Natural killer cell (primary cell): ENCODE measurements at regions of chr1 and their contacts with region 1.

Region 1: GRCh38 chr1:117615474-117615873 is 9.6 kb downstream of the TENT5C start:
- DNase-seq: peak; percentile 51 to 77
- ATAC-seq: peak; percentile 84 to 89 (median 89)
- H3K4me3 ChIP-seq: no peak overlapping the region
- H3K4me3 Mint-ChIP-seq: peak overlapping the region; percentile 74
- H3K27ac ChIP-seq: no peak overlapping the region
- H3K27ac Mint-ChIP-seq: peak overlapping the region; percentile 76 to 87
- H3K4me1 ChIP-seq: peaks cover 40% of the 10 kb centered on the region
- H3K4me1 Mint-ChIP-seq: peaks cover 67 to 74% of the 10 kb centered on the region in 2 donors
- H3K27me3 ChIP-seq: no peaks in the 10 kb centered on the region
- H3K27me3 Mint-ChIP-seq: peaks cover 4 to 5% of the 10 kb centered on the region in 2 donors
- CTCF ChIP-seq: no peak

Region 2: DNA sequence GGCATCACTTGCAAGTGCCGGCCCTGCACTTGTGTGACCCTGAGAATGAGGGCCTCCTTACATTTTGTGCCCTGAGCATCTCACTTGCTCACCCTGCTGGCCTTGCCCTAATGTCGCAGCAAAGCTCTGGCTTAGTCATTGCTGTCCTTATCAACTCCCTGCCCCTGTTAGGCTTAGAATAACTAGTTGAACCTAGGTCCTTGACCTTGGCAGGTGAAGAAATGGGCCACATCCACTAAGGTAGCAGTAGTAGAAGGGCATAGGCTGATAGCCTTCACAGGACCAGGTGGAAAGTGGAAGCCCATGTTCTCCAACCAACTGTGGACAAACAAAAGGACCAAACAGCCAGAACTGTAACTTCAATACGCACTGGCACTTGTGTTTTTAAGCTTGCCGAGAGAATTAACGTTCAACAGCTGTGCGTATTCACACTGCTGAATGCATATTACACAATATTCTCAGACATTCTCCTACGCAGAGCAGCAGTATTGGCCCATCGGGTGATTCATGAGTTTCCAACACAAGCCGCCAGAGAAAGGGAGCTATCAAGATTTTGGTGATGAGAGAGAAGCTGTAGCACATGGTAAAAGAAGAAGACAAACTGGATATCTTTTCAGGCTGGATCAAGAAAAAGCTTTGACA is 733.5 kb before region 1 on chr1:
- intact Hi-C with region 1: no loop called
- DNase-seq: peak in 1 of 2 donors; percentile 49
- ATAC-seq: peak in 1 of 3 donors; percentile 36
- H3K4me3 ChIP-seq: no peak overlapping the region
- H3K4me3 Mint-ChIP-seq: no peak overlapping the region
- H3K27ac ChIP-seq: no peak overlapping the region
- H3K27ac Mint-ChIP-seq: no peak overlapping the region
- H3K4me1 ChIP-seq: peaks cover 19% of the 10 kb centered on the region
- H3K4me1 Mint-ChIP-seq: no peaks in the 10 kb centered on the region
- H3K27me3 ChIP-seq: no peaks in the 10 kb centered on the region
- H3K27me3 Mint-ChIP-seq: no peaks in the 10 kb centered on the region
- CTCF ChIP-seq: no peak

Region 3: DNA sequence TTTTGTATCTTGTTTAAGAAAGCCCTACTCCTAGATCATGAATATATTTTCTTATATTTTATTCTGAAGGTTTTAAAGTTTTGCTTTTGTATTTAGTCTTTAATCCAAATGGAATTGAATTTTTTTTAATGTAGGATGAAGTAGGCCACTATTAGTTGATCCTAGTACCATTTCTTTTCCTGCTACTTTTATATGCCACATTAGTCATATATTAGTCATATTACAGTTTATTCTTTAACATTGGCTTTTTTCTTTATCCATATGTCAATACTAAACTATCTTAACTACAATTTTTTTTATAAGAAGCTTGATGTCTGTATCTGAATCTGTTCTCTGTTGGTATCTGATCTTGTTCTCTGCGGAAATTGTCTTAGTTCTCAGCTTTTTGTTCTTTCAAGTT is 199.5 kb before region 1 on chr1:
- intact Hi-C with region 1: no loop called
- DNase-seq: no peak
- ATAC-seq: no peak
- H3K4me3 ChIP-seq: no peak overlapping the region
- H3K4me3 Mint-ChIP-seq: no peak overlapping the region
- H3K27ac ChIP-seq: no peak overlapping the region
- H3K27ac Mint-ChIP-seq: no peak overlapping the region
- H3K4me1 ChIP-seq: no peaks in the 10 kb centered on the region
- H3K4me1 Mint-ChIP-seq: peaks cover 26 to 28% of the 10 kb centered on the region in 2 donors
- H3K27me3 ChIP-seq: no peaks in the 10 kb centered on the region
- H3K27me3 Mint-ChIP-seq: no peaks in the 10 kb centered on the region
- CTCF ChIP-seq: no peak

Region 4: GRCh38 chr1:117644696-117645311 is 29.3 kb after region 1 on chr1:
- intact Hi-C with region 1: loop called (anchors 1 kb)
- DNase-seq: peak; percentile 46 to 62
- ATAC-seq: peak; percentile 83 to 99 (median 97)
- H3K4me3 ChIP-seq: no peak overlapping the region
- H3K4me3 Mint-ChIP-seq: peak overlapping the region; percentile 67
- H3K27ac ChIP-seq: no peak overlapping the region
- H3K27ac Mint-ChIP-seq: peak overlapping the region; percentile 37 to 75
- H3K4me1 ChIP-seq: peaks cover 12% of the 10 kb centered on the region
- H3K4me1 Mint-ChIP-seq: peaks cover 16 to 18% of the 10 kb centered on the region in 2 donors
- H3K27me3 ChIP-seq: peaks cover 3% of the 10 kb centered on the region
- H3K27me3 Mint-ChIP-seq: peaks cover 30 to 37% of the 10 kb centered on the region in 2 donors
- CTCF ChIP-seq: no peak

Region 5: DNA sequence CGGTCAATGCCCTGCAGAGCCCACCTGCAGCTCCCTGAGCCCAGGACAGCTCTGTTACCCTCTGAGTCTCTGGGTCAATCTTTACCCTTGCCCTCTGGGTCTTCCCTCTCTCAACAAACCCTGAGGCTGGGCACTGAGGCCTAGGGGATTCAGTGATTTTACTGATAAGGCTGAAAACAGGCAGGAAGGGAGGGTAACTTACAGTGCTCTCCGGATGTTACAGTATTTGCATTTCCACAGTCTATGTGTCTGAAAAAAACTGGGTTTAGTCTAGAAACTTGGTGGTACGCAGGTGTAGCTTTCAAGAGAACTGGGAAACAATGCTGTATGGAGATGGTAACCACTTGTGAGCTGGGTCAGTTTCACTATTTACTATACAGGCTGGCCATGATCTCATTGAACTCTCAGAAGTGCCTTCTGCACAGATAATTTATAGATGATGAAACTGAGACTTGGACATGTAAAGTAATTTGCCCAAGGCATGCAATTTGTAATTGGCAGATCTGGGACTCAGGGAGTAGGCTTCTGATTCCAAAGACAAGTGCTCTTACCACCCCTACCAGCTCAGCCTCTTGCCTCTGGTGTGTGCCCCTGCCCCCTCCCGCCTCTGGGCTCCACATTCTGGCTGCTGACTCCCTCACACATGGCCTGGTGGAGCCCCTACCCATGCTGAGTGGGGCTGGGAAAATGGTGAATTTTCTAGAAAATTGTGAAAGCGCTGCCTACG is 39.2 kb after region 1 on chr1:
- intact Hi-C with region 1: loop called (anchors 2 kb)
- DNase-seq: peak in 1 of 2 donors; percentile 56
- ATAC-seq: peak in 1 of 3 donors; percentile 19
- H3K4me3 ChIP-seq: no peak overlapping the region
- H3K4me3 Mint-ChIP-seq: peak overlapping the region; percentile 80
- H3K27ac ChIP-seq: peak overlapping the region; percentile 80
- H3K27ac Mint-ChIP-seq: peak overlapping the region; percentile 90 to 91
- H3K4me1 ChIP-seq: peaks cover 84% of the 10 kb centered on the region
- H3K4me1 Mint-ChIP-seq: peaks cover 84 to 85% of the 10 kb centered on the region in 2 donors
- H3K27me3 ChIP-seq: no peaks in the 10 kb centered on the region
- H3K27me3 Mint-ChIP-seq: peaks cover 12 to 19% of the 10 kb centered on the region in 2 donors
- CTCF ChIP-seq: no peak

Region 6: GRCh38 chr1:117664314-117664713 is 48.8 kb after region 1 on chr1:
- intact Hi-C with region 1: loop called (anchors 1 kb)
- DNase-seq: peak in 1 of 2 donors; percentile 93
- ATAC-seq: peak; percentile 84 to 91 (median 89)
- H3K4me3 ChIP-seq: no peak overlapping the region
- H3K4me3 Mint-ChIP-seq: peak overlapping the region; percentile 79
- H3K27ac ChIP-seq: peak overlapping the region; percentile 88
- H3K27ac Mint-ChIP-seq: peak overlapping the region; percentile 94 to 97
- H3K4me1 ChIP-seq: peaks cover 62% of the 10 kb centered on the region
- H3K4me1 Mint-ChIP-seq: peaks cover 65 to 67% of the 10 kb centered on the region in 2 donors
- H3K27me3 ChIP-seq: no peaks in the 10 kb centered on the region
- H3K27me3 Mint-ChIP-seq: peaks cover 0 to 3% of the 10 kb centered on the region in 2 donors
- CTCF ChIP-seq: no peak